ENCODE measurements at regions of chr6 and their contacts with region 1.

Region 1: DNA sequence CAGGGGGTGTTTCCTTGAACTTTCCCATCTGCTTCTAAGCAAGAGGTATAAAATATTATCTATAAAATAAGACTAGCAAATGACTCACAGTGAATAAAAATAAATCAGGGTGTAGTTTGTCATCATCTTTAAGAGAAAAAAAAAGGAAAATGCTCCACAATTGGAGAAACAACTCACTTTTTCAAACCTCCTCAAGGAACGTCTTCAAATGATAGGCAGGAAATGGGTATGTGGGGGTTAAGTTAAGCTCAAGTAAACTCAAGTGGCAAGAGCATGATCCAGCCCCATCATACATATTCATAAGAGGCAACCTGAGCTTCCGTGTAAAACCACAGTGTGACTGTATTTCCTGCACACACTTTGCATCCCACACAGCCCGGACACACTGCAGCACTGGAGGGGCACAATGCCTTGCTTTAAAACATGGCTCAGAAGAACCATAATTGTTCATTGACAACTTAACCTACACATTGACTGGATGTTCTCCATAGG is 58.5 kb upstream of the CEP85L start:
- DNase-seq: peak; percentile 93
- H3K4me3 Mint-ChIP-seq: peak overlapping the region; percentile 90
- H3K27ac Mint-ChIP-seq: peak overlapping the region; percentile 92
- H3K4me1 Mint-ChIP-seq: peaks cover 65% of the 10 kb centered on the region
- H3K27me3 Mint-ChIP-seq: no peaks in the 10 kb centered on the region

Region 2: DNA sequence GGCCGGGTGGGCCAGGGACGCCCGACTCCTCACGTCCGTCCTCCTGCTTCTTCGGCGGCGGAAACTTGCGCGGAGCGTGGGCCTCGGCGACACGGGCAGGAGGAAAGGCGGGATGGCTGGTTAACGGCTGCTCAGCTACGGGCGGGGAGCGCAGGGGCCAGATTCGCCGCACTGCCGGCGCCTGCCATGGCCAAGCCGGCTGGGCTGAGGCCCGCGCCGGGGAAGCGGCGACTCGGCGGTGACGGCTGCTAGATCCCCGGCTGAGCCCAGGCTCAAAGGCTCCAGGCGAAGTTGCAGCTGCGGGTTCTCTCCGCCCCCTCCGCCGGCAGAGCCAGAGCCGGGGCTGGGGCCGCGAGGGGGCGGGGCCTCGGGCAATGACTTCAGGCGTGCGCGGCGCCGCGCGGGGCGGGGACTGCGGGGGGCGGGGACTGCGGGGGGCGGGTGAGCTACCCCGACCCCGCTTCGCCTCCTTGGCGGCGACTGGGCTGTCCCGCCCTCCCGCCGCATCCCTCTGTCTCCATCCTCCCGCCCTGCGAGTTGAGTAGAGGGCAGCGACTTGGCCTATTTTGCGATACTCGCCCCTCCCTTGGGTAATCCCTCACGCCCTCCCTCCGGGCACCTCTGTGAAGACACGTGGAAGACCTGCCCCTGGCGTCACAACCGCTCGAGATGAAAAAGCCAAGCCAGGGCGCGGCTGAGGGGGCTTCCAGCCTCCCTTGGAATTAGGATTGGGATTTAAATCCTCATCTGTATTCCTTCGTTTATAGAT is 58.4 kb before region 1 on chr6 and contains the start of gene CEP85L:
- intact Hi-C with region 1: loop called (anchors 1 kb)
- DNase-seq: peak; percentile 96
- H3K4me3 Mint-ChIP-seq: peak within 1 kb of the TSS; percentile 90
- H3K27ac Mint-ChIP-seq: peak within 1 kb of the TSS; percentile 93
- H3K4me1 Mint-ChIP-seq: peaks cover 29% of the 10 kb centered on the region
- H3K27me3 Mint-ChIP-seq: no peaks in the 10 kb centered on the region
- total RNA-seq, gene CEP85L: 42.3 and 42.7 TPM in 2 replicates

Region 3: DNA sequence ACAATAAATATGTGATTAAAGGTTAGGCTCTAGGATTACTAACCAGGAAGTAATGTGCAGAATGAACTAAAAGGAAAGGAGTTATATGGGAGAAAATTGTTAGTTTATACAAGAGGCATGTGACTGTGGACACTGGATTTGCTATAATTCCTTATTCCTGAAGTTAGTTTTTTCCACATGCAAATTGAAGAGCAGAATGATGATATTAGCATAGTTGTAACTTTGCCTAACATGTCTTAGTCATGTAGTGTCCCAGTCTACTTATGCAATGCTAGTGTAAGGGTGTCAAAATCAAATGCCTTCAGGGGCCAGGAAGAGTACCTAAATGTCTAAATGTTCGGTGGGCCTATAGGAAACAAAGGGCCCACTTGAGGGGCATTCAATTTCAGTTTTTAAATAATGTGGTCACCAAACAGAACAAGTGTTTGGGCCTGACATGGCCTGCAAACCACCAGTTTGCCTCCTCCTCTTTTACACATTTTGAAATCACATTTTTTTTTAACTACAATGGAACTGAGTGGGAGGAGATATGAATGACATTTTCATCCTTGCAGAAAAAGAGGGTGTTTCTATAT is 30.5 kb before region 1 on chr6:
- intact Hi-C with region 1: loop called (anchors 1 kb)
- DNase-seq: no peak
- H3K4me3 Mint-ChIP-seq: no peak overlapping the region
- H3K27ac Mint-ChIP-seq: peak overlapping the region; percentile 80
- H3K4me1 Mint-ChIP-seq: peaks cover 33% of the 10 kb centered on the region
- H3K27me3 Mint-ChIP-seq: no peaks in the 10 kb centered on the region

Region 4: DNA sequence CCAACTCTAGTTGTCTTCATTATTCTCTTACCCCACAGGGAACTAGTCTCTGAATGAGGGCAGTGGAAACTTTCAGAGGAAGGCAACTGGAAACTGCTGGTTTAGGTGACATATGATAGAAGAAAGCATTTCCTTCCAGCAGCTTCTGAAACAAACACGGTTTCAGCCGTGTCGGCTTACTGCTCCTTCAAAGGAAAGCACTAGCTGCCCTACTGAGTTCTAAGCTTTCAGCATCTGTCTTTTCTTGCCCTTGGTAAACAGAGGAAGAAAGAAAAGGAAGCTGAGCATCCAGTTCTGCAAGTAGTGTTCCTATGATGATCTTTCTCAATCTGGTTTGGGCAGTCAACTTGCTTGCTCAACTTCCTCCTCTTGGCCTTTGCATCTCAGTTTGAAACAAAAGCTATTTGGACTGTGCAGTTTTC is 59.0 kb after region 1 on chr6:
- intact Hi-C with region 1: loop called (anchors 1 kb)
- DNase-seq: peak; percentile 78
- H3K4me3 Mint-ChIP-seq: peak overlapping the region; percentile 34
- H3K27ac Mint-ChIP-seq: peak overlapping the region; percentile 81
- H3K4me1 Mint-ChIP-seq: peaks cover 18% of the 10 kb centered on the region
- H3K27me3 Mint-ChIP-seq: no peaks in the 10 kb centered on the region

Region 5: DNA sequence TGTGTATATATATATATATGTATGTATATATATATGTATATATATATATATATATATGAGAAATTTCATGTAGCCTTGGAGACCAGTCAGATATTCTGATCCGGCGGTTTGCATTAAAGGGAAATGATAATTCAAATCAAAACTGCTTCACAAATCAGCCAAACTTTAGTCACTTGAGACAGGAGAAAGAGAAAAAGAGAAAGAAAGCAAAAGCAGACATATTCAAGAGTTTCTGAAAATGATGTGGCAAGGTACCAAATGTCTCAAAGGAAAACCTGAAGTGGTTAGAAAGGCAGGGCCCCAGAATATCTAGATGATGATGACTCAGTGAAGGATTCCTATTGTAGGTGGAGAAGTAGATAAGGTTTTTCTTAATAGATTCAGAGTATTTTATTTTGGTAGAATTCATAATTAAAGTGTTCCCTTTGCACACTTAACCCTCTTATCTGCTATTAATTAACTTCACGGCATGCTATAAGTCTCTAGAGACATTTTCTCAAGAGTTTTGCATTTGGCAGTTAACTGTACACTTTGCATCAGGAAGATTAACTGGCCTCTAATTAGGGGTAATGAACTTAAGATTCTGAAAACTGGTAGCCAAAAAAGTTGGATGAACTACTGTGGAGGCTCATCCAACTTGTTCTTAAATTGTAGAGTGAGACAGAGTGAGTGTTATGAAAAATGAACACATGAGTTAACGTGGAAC is 133.9 kb after region 1 on chr6:
- intact Hi-C with region 1: loop called (anchors 1 kb)
- DNase-seq: peak; percentile 73
- H3K4me3 Mint-ChIP-seq: peak overlapping the region; percentile 59
- H3K27ac Mint-ChIP-seq: peak overlapping the region; percentile 72
- H3K4me1 Mint-ChIP-seq: peaks cover 22% of the 10 kb centered on the region
- H3K27me3 Mint-ChIP-seq: no peaks in the 10 kb centered on the region

Region 6: GRCh38 chr6:118921084-118921483 is 211.2 kb after region 1 on chr6:
- intact Hi-C with region 1: no loop called
- DNase-seq: no peak
- H3K4me3 Mint-ChIP-seq: no peak overlapping the region
- H3K27ac Mint-ChIP-seq: no peak overlapping the region
- H3K4me1 Mint-ChIP-seq: peaks cover 4% of the 10 kb centered on the region
- H3K27me3 Mint-ChIP-seq: no peaks in the 10 kb centered on the region

Measured in activated CD4-positive, alpha-beta T cell treated with anti-CD3 and anti-CD28 coated beads, Interleukin-2, amount 10 ng/mL, durations not matched to agents 24 days and 14 days (primary cell).